ENCODE measurements at regions of chr19 and their contacts with region 1.

Region 1: DNA sequence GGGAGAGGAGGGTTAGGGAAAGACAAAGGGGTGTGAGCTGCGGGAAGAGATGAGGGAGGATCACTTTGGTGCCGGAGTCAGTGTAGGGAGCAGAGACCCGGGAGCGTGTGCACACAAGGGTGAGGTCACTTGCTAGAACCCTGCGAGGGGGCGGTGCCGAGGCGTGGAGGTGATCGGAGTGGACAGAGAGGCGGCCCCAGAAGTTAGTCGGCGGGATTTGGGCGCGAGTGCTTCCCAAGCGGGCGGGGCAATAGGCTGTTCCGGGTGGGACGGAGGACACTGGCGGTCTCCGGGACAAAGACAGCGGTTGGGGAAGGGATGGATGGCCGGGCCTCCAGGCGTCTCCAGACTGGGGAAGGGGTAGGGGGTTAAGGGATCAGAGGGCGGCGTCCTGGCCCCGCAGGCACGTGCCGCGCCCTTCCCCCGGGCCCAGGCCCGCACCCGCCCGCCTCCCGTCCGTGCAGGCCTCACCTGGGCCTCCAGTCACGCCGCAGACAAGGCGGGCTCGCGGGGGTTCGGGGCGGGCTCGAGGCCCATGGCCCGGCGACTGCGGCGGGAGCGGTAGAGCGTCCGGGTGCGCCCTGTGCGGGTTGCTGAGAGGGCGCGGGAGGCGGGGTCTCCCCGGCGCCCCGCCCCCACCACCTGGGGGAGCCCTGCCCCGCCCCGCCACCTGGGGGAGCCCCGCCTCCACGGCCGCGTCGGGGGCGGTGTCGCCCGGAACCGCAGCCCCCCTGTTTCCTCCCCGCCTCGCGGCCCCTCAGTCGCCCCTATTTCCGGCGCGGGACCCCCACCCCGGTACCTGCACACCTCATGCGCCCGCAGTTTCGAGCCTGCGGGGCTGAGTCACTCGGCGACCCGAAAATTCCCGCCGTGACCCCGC is at the start of gene LPAR2:
- DNase-seq: peak; percentile 79 to 83
- H3K4me3 ChIP-seq: peak within 1 kb of the TSS; percentile 87
- H3K4me3 Mint-ChIP-seq: peak within 1 kb of the TSS; percentile 91
- H3K27ac Mint-ChIP-seq: peak within 1 kb of the TSS; percentile 93
- H3K4me1 ChIP-seq: no peaks in the 10 kb centered on the region
- H3K4me1 Mint-ChIP-seq: peaks cover 19% of the 10 kb centered on the region
- H3K27me3 ChIP-seq: no peaks in the 10 kb centered on the region
- H3K27me3 Mint-ChIP-seq: no peaks in the 10 kb centered on the region
- CTCF ChIP-seq: no peak
- total RNA-seq, gene LPAR2: 29.3 and 31.3 TPM in 2 replicates

Region 2: GRCh38 chr19:19531951-19532805 is 95.7 kb before region 1 on chr19:
- CTCF ChIA-PET with region 1: interaction called, 3 read pairs
- POLR2A ChIA-PET with region 1: interaction called, 7 read pairs
- intact Hi-C with region 1: loop called (anchors 5 kb)
- DNase-seq: peak; percentile 71 to 85
- H3K4me3 ChIP-seq: no peak overlapping the region
- H3K4me3 Mint-ChIP-seq: no peak overlapping the region
- H3K27ac Mint-ChIP-seq: no peak overlapping the region
- H3K4me1 ChIP-seq: no peaks in the 10 kb centered on the region
- H3K4me1 Mint-ChIP-seq: peaks cover 10% of the 10 kb centered on the region
- H3K27me3 ChIP-seq: no peaks in the 10 kb centered on the region
- H3K27me3 Mint-ChIP-seq: no peaks in the 10 kb centered on the region
- CTCF ChIP-seq: peak; percentile 83 to 96

Region 3: GRCh38 chr19:19643158-19644053 is 15.5 kb after region 1 on chr19 and contains the start of gene GMIP:
- CTCF ChIA-PET with region 1: interaction called, 5 read pairs
- POLR2A ChIA-PET with region 1: no interaction called
- intact Hi-C with region 1: loop called (anchors 1 kb)
- DNase-seq: peak; percentile 82 to 87
- H3K4me3 ChIP-seq: peak within 1 kb of the TSS; percentile 52
- H3K4me3 Mint-ChIP-seq: peak within 1 kb of the TSS; percentile 87
- H3K27ac Mint-ChIP-seq: peak within 1 kb of the TSS; percentile 95
- H3K4me1 ChIP-seq: 0 out of 2 replicates have a peak, but pooled peaks cover 3% of the 10 kb centered on the region
- H3K4me1 Mint-ChIP-seq: peaks cover 7% of the 10 kb centered on the region
- H3K27me3 ChIP-seq: no peaks in the 10 kb centered on the region
- H3K27me3 Mint-ChIP-seq: no peaks in the 10 kb centered on the region
- CTCF ChIP-seq: peak; percentile 76 to 83
- total RNA-seq, gene GMIP: 8.6 and 10.4 TPM in 2 replicates

Region 4: DNA sequence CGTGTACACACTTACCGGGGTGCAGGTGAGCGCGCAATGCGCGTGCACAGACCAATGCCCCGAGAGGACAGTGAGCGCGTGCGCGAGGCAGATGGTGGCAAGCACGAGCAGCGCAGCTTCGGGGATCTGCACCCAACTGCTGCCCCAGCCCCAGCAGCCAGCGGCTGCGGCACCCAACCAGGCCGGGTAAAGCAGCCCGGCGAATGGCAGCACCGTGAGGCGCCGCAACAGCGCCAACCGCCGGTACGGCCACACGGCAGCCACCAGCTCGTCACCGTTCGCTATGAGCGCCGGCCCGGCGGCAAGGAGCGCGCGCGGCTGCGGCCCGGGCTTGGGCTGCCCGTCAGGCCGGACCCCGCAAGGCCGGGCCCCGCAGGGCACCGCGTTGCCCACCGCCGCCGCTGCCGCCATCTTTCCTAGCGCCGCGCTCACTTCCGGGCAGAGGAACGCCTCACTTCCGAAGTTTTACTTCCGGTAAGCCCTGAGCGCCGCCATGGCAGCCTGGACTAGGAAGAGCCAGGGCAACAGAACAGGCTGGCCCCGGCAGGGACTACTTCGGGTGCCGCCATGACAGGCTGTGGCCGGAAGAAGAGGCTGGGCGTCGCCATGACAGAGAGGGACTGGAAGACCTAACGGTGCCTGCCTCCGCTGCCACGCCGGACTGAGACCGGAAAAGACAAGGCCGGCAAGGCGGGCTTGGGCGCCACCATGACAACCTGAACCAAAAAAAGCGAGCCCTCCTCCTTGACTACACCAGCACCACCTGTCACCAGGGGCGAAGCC is 35.6 kb after region 1 on chr19 and contains the start of gene ATP13A1:
- CTCF ChIA-PET with region 1: no interaction called
- POLR2A ChIA-PET with region 1: no interaction called
- intact Hi-C with region 1: loop called (anchors 2 kb)
- DNase-seq: peak; percentile 93 to 97
- H3K4me3 ChIP-seq: peak within 1 kb of the TSS; percentile 99
- H3K4me3 Mint-ChIP-seq: peak within 1 kb of the TSS; percentile 82
- H3K27ac Mint-ChIP-seq: peak within 1 kb of the TSS; percentile 93
- H3K4me1 ChIP-seq: no peaks in the 10 kb centered on the region; the same call in 1 of the 2 replicates
- H3K4me1 Mint-ChIP-seq: no peaks in the 10 kb centered on the region
- H3K27me3 ChIP-seq: no peaks in the 10 kb centered on the region
- H3K27me3 Mint-ChIP-seq: no peaks in the 10 kb centered on the region
- CTCF ChIP-seq: no peak
- total RNA-seq, gene ATP13A1: 83.0 and 93.1 TPM in 2 replicates

Measured in Caco-2 (cell line).